Panc1 (cell line): ENCODE measurements at regions of chr9 and their contacts with region 1.

Region 1: DNA sequence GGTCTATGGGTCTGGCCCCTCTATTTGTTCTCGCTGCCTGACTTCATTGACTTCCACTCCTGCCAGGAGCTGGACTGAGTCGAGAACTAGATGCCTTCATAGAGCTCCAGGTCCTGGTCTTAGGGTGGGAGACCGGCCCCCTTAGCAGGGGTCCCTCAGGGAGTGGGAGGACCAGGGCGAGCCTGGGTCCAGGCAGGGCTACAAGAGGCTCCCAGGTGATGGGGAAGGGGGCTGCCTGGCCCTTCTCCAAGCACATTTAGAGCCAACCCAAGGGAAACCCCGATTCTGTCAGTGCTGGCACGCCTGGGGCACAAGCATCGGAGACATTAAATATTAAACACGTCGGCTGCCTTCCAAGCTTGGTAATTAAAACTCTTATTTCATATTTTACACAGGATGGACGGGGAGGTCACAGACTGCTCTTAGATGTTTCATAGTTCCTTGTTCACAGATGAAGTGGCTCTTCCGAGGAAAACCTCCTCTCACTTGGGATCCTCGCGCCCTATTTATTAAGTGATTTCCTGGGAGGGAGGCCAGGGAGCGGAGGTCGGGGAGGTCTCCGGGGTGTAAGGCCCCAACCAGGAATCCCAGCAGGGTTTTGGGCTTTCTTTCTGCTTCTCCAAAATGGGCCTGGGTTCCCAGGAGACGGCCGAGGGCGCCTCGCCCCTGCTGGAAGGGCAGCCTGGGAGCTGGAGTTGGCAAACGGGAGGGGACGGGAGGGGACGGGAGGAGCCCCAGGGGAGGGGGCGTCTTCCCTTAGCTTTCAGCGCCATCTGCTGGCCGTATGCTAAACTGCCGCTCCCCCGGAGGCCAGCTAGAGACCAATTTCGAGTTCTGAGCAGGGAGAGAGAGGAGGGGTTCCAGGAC is 23.4 kb upstream of the ZBTB43 start:
- DNase-seq: no peak
- ATAC-seq: peak; percentile 96
- H3K4me3 ChIP-seq: peak overlapping the region; percentile 11 to 36; a peak in 3 of 4 replicates
- H3K27ac ChIP-seq: no peak overlapping the region
- H3K4me1 ChIP-seq: peaks cover 2% of the 10 kb centered on the region; the same call in 1 of the 2 replicates
- H3K27me3 ChIP-seq: no peaks in the 10 kb centered on the region
- CTCF ChIP-seq: peak; percentile 84

Region 2: GRCh38 chr9:126626127-126626925 is 155.1 kb before region 1 on chr9:
- CTCF ChIA-PET with region 1: no interaction called
- POLR2A ChIA-PET with region 1: no interaction called
- in situ Hi-C with region 1: no loop called
- intact Hi-C with region 1: no loop called
- DNase-seq: no peak
- ATAC-seq: no peak; the same call in 1 of the 2 replicates
- H3K4me3 ChIP-seq: no peak overlapping the region
- H3K27ac ChIP-seq: no peak overlapping the region
- H3K4me1 ChIP-seq: no peaks in the 10 kb centered on the region
- H3K27me3 ChIP-seq: no peaks in the 10 kb centered on the region
- CTCF ChIP-seq: no peak

Region 3: DNA sequence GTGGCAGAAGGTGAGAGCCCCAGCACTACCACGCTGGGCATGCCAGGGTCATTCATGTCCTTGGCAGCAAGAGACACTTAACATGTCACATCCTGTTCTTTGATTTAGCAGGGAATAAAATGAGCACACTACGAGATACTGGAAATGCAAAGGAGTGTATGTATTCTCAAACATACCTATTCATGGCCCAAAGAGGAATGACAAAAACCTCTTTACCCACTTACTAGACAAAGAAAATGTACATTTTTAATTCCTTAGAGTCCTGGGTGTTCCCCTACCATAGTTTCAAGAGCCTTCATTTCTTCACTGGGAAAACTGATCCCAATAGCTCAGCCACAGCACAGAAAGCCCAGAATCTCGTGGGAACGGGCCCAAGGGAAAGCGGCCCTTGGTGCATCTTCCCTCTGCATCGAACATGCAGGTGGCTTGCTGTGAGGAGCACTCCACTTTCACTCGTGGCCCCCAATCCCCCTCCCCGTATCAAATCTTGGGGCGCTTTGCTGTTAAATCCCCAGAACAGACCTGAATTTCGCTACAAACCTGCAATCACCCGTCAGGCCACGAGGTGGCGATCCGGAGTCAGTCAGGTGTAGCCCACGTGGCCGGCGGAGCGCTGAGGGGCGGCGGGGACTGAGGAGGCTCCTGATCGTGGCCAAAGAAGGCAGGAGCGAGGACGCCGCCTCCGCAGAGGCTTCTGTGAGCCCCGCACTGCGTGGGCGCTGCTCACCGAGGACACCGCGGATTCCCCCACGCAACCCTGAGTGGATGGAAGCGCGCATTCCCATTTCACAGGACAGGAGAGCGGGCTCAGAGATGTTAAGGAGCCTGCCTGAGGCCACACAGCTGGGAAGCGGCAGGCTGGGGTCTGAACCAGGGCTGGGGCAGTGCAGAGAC is 76.3 kb before region 1 on chr9:
- CTCF ChIA-PET with region 1: interaction called, 33 read pairs
- POLR2A ChIA-PET with region 1: no interaction called
- in situ Hi-C with region 1: no loop called
- intact Hi-C with region 1: loop called (anchors 1 kb)
- DNase-seq: peak; percentile 57
- ATAC-seq: peak; percentile 62
- H3K4me3 ChIP-seq: peak overlapping the region in 1 of 2 experiments; percentile 27; a peak in 1 of 4 replicates
- H3K27ac ChIP-seq: no peak overlapping the region
- H3K4me1 ChIP-seq: peaks cover 4% of the 10 kb centered on the region
- H3K27me3 ChIP-seq: no peaks in the 10 kb centered on the region
- CTCF ChIP-seq: peak; percentile 89